GM10248 (cell line): ENCODE measurements at regions of chr6 and their contacts with region 1.

Region 1: GRCh38 chr6:149431905-149432775 is 32.1 kb downstream of the SUMO4 start:
- DNase-seq: peak; percentile 88
- CTCF ChIP-seq: peak; percentile 97

Region 2: DNA sequence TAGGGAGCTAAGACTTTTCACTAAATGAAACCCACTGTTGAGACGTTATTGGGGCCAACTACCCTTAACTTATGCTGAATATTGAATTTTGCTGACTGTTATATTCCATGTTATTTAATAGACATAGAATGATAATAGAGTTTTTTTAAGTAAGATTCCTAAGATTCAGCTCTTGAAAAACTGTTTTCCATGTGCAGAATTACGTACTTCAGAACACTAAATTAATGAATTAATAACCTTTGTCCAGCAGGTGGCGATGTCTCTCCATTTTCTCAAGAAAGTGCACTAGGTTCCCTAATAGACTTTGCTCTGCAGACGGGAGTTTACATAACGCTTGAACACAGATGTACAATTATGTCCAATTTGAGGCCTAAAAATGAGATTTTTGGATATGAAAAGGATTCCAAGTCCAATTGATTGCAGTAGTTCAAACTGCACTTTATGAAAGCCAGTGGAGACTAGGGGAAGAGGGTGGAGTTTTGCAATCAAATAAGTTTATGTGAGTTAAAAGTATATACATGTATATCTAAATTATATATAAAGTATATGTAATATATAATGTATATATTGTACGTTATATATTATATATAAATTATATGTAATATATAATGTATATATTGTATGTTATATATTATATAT is 403.3 kb before region 1 on chr6:
- CTCF ChIA-PET with region 1: interaction called, 192 read pairs
- POLR2A ChIA-PET with region 1: no interaction called
- DNase-seq: peak; percentile 59
- CTCF ChIP-seq: peak; percentile 54

Region 3: GRCh38 chr6:149060300-149060997 is 371.7 kb before region 1 on chr6:
- CTCF ChIA-PET with region 1: interaction called, 16 read pairs
- POLR2A ChIA-PET with region 1: no interaction called
- DNase-seq: peak; percentile 52
- CTCF ChIP-seq: no peak

Region 4: GRCh38 chr6:149082286-149082707 is 349.8 kb before region 1 on chr6:
- CTCF ChIA-PET with region 1: interaction called, 38 read pairs
- POLR2A ChIA-PET with region 1: no interaction called
- DNase-seq: peak; percentile 69
- CTCF ChIP-seq: peak; percentile 81

Region 5: DNA sequence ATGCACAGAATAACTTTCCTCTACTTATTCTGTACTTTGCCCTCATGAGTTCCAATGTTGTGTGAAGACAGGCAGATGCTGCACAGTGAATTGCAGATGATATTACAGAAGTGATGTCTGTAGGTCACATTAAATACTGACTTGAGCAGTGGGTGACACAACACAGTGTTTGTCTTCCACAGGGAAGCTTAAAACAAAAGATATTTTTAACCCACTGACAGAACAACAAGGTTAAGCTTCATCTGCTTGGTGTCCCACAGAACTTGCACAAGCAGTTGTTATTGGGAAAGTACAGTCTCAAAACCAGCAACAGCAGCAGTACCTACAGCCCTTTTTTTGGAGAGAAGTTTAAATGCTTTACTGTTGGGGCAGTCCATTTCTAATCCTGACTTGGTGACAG is 21.6 kb before region 1 on chr6:
- CTCF ChIA-PET with region 1: interaction called, 18 read pairs
- POLR2A ChIA-PET with region 1: no interaction called
- DNase-seq: no peak
- CTCF ChIP-seq: no peak

Region 6: GRCh38 chr6:149445095-149445466 is 12.9 kb after region 1 on chr6:
- CTCF ChIA-PET with region 1: interaction called, 20 read pairs
- POLR2A ChIA-PET with region 1: no interaction called
- DNase-seq: no peak
- CTCF ChIP-seq: no peak

Region 7: DNA sequence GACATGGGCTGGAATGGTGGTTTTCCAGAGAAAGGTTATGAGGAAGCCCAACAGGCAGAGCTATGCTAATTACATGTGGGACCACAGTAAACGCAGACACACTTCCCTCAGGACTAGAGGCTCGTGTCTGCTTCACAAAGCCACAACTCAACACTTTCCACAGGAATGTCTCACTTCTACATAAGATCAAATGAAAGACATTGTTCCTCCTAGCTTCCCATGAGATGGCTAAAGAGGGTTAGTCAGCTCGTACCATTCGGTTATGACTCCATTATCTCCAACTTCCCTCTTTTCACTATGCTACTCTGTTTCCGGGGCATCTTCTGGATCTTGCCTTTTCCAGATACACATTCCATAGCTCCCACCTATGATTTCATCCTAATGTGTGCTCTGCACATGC is 81.8 kb after region 1 on chr6:
- CTCF ChIA-PET with region 1: interaction called, 20 read pairs
- POLR2A ChIA-PET with region 1: no interaction called
- DNase-seq: no peak
- CTCF ChIP-seq: no peak

Region 8: DNA sequence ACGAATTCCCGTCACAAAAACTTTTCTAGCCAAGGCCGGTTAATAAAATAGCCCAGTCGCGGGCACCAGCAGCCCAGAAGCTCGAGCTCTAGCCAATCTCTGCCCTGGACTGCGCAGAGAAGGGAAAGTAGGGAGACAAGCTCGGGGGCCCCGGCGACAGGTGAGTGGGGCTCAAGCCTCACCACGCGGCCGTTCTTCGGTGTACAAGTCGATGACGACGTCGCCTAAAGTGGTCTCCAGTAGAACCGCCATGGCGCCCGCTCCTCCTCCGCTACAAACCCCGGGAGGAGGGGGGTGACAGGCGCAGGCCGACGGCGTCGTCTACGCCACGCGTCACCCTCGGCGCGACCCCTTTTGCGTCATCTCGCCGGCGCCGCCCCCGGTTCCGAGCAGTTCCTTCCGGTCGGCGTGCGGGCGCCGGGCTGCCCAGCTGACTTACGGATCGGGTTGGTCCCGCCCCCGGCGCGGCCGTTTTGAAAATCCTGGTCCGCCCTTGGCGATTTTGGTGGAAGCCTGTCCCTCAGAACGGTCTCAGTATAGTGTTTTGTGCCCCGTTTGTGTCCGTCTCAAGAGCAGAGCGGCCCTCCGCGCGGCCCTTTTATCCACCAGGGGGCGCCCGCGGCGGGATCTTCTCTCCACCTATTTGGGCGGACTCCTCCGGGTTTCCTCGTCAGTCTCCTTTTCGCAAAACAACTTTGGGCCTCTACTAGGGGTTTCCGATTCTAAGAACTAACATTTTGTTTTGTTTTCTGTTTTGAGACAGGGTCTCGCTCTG is 113.8 kb after region 1 on chr6 and contains the start of gene PPIL4:
- CTCF ChIA-PET with region 1: no interaction called
- POLR2A ChIA-PET with region 1: no interaction called
- DNase-seq: peak; percentile 96
- CTCF ChIP-seq: peak; percentile 64

Region 9: DNA sequence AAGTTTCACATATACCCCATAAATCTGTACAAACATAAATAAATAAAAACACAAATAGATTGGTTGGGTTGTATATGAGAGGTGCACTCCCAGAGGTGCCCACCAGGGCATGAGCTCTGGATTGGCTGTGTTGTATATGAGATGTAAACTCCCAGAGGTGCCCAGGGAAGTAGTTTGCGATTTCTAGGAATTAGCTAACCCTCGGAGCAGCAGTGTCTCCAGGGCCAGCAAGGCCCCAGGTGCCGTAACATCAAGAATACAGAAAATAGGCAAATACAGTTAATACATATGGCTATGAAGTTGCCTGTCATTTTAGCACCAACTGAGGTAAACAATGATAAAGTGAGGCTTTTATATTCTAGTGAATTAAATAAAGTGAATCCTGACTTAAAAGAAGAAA is 128.6 kb after region 1 on chr6:
- CTCF ChIA-PET with region 1: no interaction called
- POLR2A ChIA-PET with region 1: no interaction called
- DNase-seq: no peak
- CTCF ChIP-seq: peak; percentile 12